Activated naive CD4-positive, alpha-beta T cell treated with anti-CD3 and anti-CD28 coated beads for 36 hours (primary cell): ENCODE measurements at regions of chr3 and their contacts with region 1.

Region 1: GRCh38 chr3:194671900-194672808 is at the start of gene LSG1:
- DNase-seq: peak; percentile 94
- H3K4me3 Mint-ChIP-seq: peak within 1 kb of the TSS; percentile 99
- H3K27ac Mint-ChIP-seq: peak within 1 kb of the TSS; percentile 97
- H3K4me1 Mint-ChIP-seq: peaks cover 55% of the 10 kb centered on the region
- H3K27me3 Mint-ChIP-seq: no peaks in the 10 kb centered on the region
- total RNA-seq, gene LSG1: 26.4 to 27.0 TPM

Region 2: GRCh38 chr3:194447161-194447560 is 225.0 kb before region 1 on chr3:
- CTCF ChIA-PET with region 1: no interaction called
- intact Hi-C with region 1: no loop called
- DNase-seq: no peak
- H3K4me3 Mint-ChIP-seq: no peak overlapping the region
- H3K27ac Mint-ChIP-seq: no peak overlapping the region
- H3K4me1 Mint-ChIP-seq: peaks cover 2% of the 10 kb centered on the region
- H3K27me3 Mint-ChIP-seq: no peaks in the 10 kb centered on the region

Region 3: GRCh38 chr3:194654443-194654842 is 17.7 kb before region 1 on chr3:
- CTCF ChIA-PET with region 1: interaction called, 9 read pairs
- intact Hi-C with region 1: loop called (anchors 1 kb)
- DNase-seq: peak; percentile 15
- H3K4me3 Mint-ChIP-seq: no peak overlapping the region
- H3K27ac Mint-ChIP-seq: peak overlapping the region; percentile 80
- H3K4me1 Mint-ChIP-seq: peaks cover 19% of the 10 kb centered on the region
- H3K27me3 Mint-ChIP-seq: no peaks in the 10 kb centered on the region

Region 4: DNA sequence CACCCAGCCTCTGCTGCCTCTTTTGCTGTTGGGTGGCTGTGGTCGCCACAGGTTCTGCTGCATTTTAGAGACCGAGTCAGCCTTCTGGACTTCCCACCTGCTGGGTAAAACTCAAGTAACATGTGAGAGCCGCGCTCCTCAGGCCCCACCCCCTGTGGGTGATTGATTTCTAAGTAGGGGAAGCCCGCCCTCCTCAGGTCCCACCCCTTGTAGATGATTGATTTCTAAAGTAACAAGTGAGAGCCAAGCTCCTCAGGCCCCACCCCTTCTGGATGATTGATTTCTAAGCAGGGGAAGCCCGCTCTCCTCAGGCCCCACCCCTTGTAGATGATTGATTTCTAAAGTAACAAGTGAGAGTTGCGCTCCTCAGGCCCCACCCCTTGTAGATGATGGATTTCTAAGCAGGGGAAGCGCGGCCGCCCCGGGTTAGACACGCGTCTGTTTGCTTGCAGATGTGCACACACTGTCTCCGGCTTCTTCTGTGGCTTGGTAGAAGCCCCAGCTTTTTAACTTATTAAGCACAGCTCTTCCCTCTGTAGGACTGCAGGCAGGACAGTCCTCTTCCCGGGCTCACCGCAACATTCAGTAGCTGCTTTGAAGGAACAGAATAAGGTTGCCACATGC is 97.0 kb after region 1 on chr3:
- CTCF ChIA-PET with region 1: interaction called, 4 read pairs
- intact Hi-C with region 1: loop called (anchors 1 kb)
- DNase-seq: peak; percentile 99
- H3K4me3 Mint-ChIP-seq: peak overlapping the region; percentile 70
- H3K27ac Mint-ChIP-seq: peak overlapping the region; percentile 66
- H3K4me1 Mint-ChIP-seq: peaks cover 11% of the 10 kb centered on the region
- H3K27me3 Mint-ChIP-seq: no peaks in the 10 kb centered on the region

Region 5: DNA sequence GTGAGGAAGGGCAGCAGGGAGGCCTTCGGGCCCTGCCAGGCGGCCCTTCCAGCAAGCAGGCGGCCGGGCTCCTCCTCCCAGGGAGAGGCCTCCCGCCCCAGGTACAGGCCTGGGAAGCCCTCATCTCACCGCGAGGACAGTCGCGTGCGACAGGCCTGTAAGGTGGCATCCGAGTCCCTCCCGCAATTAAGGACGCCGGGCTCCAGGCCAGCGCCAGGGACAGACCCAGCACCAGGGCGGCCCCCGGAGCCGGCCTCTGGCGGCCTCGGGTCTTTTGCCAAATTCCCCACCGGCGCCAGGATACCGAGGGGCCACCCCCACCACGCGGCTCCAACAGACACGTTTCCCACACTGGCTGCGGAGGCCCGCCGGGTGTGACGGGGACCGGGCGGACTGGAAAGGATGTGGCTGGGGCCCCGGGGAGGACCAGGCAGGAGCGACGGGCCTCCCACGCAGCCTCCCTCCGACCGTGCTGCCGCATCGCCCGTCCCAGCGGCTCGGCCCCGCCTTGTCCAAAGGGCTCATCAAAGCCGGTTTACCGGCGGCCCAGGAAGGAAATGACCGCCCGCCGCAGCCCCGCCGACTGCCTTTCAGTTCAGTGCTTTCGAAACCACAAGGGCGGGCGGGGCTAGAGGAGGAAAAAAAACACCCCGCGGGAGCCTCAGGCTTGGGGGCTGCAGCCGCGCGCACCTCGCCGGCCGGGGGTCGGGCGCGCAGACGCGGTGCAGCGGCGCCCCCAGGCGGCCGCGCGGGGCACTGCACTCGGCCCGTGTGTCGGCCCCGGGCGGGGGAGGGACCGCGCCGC is 587.5 kb after region 1 on chr3:
- CTCF ChIA-PET with region 1: interaction called, 4 read pairs
- intact Hi-C with region 1: loop called (anchors 1 kb)
- DNase-seq: peak; percentile 79
- H3K4me3 Mint-ChIP-seq: peak overlapping the region; percentile 55
- H3K27ac Mint-ChIP-seq: no peak overlapping the region
- H3K4me1 Mint-ChIP-seq: peaks cover 13% of the 10 kb centered on the region
- H3K27me3 Mint-ChIP-seq: no peaks in the 10 kb centered on the region

Region 6: DNA sequence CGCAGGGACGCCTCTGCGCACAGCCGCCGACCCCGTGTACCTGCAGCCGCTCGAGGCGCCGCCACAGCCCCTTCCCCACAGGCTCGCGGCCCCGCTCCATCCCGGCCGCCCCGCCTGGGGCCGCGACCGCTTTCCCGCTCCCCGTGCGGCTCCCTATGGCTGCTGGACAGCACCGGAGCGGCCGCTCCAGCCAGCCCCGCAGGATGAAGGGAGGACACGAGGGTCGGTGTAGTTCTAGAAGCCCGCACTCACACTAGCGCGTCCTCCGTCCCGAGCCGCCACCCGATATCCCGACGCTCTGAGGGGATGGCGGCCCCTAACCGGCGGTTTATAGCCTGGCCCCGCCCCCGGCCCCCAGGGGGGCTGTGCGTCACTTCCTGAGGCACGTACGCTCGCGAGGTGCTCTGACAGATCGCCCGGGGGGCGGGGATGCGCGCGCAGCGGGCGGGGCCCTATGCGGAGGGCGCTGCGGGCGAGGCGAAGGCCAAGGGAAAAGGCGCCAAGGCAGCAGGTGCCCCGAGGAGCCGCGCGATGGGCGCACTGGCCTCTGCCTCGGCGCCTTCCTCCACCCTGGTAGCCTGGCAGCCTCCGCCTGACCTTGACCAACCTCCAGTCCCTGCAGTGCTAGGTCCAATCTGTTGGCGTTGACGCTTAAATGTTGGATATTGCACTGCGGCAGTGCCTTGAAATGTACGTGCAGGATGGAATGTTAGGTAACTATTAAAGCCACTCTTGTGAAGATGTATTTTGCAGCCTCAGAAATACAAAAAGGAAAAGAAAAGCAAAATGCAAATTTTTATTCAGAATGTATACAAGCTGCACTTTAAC is 1409.9 kb after region 1 on chr3 and contains the start of gene TFRC:
- CTCF ChIA-PET with region 1: no interaction called
- intact Hi-C with region 1: loop called (anchors 10 kb)
- DNase-seq: peak; percentile 96
- H3K4me3 Mint-ChIP-seq: peak within 1 kb of the TSS; percentile 97
- H3K27ac Mint-ChIP-seq: peak within 1 kb of the TSS; percentile 93
- H3K4me1 Mint-ChIP-seq: peaks cover 36% of the 10 kb centered on the region
- H3K27me3 Mint-ChIP-seq: no peaks in the 10 kb centered on the region
- total RNA-seq, gene TFRC: 436 to 442 TPM